ENCODE measurements at regions of chr17 and their contacts with region 1.

Region 1: GRCh38 chr17:75428543-75429469 is 23.3 kb upstream of the GRB2 start:
- DNase-seq: no peak
- H3K4me3 ChIP-seq: no peak overlapping the region
- H3K27ac ChIP-seq: peak overlapping the region in 4 of 8 donors; percentile 21 to 38 (median 31)
- H3K4me1 ChIP-seq: peaks cover 5 to 27% (median 14%) of the 10 kb centered on the region in 6 donors
- H3K27me3 ChIP-seq: no peaks in the 10 kb centered on the region
- CTCF ChIP-seq: no peak
- POLR2A ChIP-seq: no peak

Region 2: DNA sequence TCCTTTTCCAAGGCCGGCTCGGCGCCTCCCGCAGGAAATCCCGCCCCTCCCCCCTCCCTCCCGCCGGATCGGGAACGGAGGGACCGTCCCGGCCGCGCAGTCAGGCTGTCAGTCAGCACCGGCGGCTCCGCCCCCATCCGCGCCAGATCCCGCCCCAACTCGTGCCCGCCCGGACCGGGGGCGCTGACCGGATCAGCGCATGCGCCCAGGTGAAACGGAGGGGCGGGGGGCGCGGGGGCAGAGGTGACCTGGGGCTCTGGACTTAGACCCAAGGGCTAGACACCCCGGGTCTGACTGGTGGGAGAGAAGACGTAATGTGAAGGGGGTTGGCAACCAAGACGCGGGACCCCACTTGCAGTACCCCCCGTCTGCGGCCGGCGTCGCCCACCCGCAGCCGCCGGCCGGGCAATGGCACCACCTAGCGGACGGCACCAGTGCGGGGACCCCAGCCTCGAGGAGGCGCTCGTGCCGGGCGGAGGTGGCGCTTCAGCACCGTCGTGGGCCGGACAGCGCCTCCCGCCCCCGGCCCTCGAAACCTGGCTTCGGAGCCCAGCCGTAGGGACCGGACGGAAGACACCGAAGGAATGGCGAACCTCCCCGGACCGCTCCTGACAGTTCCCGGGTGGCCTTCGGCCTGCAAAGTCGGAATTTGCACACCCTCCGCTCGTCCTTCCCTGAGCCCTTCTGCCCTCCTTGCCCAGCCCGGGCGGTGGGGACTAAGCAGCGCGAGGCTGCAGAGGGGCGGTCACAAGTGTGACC is 86.9 kb after region 1 on chr17 and contains the start of gene CASKIN2:
- intact Hi-C with region 1: loop called (anchors 10 kb)
- DNase-seq: peak; percentile 95
- H3K4me3 ChIP-seq: peak within 1 kb of the TSS; percentile 70 to 99 (median 94)
- H3K27ac ChIP-seq: peak within 1 kb of the TSS; percentile 60 to 90 (median 84)
- H3K4me1 ChIP-seq: peaks cover 8 to 85% (median 55%) of the 10 kb centered on the region in 6 donors
- H3K27me3 ChIP-seq: peaks cover 0 to 18% (median 0%) of the 10 kb centered on the region in 7 donors
- CTCF ChIP-seq: peak; percentile 88 to 98 (median 96)
- POLR2A ChIP-seq: no peak
- total RNA-seq, gene CASKIN2: 33.5 to 135 (median 51.1) TPM

Region 3: DNA sequence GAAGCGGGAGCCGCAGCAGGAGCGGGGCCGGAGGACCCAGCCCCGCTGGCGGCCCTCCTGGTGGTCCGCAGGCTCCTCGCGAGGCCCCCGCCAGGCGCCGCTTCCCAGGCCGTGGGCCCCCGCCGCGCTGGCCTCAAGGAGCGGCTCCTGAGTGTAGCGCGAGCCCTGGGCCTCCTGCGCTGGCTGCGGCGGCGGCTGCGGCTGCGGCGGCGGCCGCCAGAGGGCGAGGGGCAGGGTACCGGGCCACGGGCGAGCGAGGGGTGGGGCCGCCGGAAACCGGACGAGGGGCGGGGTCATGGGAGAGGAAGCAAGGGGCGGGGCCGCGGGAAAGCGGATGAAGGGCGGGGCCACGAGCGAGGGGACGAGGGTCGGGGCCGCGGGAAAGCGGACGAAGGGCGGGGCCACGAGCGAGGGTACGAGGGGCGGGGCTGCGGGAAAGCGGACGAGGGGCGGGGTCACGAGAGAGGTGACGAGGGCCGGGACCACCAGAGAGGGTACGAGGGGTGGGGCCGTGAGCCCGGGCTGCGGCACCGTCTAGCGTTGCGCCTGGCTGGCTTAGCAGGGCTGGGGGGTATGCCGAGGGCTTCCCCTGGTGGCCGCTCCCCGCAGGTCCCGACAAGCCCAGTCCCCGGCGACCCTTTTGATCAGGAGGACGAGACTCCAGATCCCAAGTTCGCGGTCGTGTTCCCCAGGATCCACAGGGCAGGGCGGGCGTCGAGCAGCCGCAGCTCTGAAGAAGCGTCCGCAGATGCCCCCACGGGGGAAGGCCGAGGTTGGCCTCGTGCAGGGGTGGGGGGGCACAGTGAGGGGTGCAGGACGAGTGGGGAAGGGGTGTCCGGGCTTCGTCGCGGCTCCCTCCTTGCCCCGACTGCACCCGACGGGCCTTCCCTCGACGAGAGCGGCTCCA is 160.5 kb after region 1 on chr17:
- intact Hi-C with region 1: loop called (anchors 5 kb)
- DNase-seq: peak; percentile 100
- H3K4me3 ChIP-seq: peak overlapping the region; percentile 52 to 91 (median 70)
- H3K27ac ChIP-seq: peak overlapping the region; percentile 93 to 98 (median 96)
- H3K4me1 ChIP-seq: peaks cover 6 to 44% (median 29%) of the 10 kb centered on the region in 6 donors
- H3K27me3 ChIP-seq: peaks cover 0 to 11% (median 0%) of the 10 kb centered on the region in 7 donors
- CTCF ChIP-seq: peak in 10 of 11 experiments; percentile 23 to 93 (median 85)
- POLR2A ChIP-seq: no peak

Region 4: GRCh38 chr17:75779231-75779986 is 350.6 kb after region 1 on chr17:
- intact Hi-C with region 1: no loop called
- DNase-seq: peak; percentile 97
- H3K4me3 ChIP-seq: peak overlapping the region; percentile 70 to 99 (median 92)
- H3K27ac ChIP-seq: peak overlapping the region; percentile 97 to 100 (median 98)
- H3K4me1 ChIP-seq: peaks cover 46 to 86% (median 70%) of the 10 kb centered on the region in 6 donors
- H3K27me3 ChIP-seq: no peaks in the 10 kb centered on the region
- CTCF ChIP-seq: peak in 3 of 11 experiments; percentile 4 to 33 (median 31)
- POLR2A ChIP-seq: peak; percentile 100

Measured in spleen (tissue), 13 donors.